Posterior cingulate gyrus (tissue), 11 donors: ENCODE measurements at regions of chr3 and their contacts with region 1.

Region 1: DNA sequence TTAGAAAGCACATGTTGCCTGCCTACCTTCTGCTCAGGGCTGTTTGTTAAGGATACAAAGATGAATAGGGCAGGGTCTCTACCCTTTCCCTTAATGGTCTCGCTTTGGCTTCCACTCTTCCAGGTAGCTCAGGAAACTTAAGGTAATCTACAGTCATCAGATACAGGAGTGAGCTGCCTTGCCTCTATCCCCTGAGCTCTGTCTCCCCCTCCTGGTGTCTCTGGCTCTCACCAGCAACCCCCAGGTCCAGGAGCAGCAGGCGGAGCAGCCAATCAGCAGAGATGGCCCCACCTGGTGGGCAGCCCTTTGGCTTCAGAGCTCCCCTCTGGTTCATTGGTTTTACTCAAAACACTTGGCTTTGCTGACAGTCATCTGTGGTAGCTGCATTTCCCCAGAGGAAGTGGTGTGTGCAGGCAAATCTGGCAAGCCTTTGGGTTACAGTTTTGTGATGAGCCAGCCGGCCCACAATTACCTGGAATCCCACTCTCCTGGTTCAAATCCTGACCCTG is 8.5 kb upstream of the CX3CR1 start:
- DNase-seq: peak; percentile 57 to 96 (median 80)

Region 2: DNA sequence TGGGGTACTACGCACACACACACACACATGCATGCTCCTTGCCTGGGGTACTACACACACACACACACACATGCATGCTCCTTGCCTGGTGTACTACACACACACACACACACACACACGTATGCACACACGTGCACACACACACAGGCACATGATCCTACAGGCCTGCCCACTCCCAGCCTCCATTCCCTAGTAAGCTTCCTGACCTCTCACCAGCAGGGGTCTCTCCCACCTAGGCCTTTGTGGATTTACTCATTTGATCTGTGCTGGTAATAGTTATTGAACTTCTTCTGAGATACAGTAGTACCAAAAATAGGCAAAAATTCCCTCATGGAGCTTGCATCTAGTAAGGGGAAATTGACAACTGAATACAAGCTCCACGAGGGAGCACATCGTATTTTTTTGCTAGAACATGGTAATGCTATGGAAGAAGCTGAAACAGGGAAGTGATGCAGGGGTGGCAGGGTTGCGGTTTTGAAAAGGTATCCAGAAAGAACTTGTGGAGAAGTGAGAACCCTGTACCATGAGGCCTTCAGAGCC is 161.8 kb before region 1 on chr3:
- intact Hi-C with region 1: loop called (anchors 1 kb)
- DNase-seq: peak in 4 of 10 donors; percentile 45 to 56 (median 54)

Region 3: GRCh38 chr3:39189959-39190269 is 98.4 kb before region 1 on chr3:
- intact Hi-C with region 1: loop called (anchors 1 kb)
- DNase-seq: peak in 4 of 10 donors; percentile 56 to 91 (median 60)

Region 4: DNA sequence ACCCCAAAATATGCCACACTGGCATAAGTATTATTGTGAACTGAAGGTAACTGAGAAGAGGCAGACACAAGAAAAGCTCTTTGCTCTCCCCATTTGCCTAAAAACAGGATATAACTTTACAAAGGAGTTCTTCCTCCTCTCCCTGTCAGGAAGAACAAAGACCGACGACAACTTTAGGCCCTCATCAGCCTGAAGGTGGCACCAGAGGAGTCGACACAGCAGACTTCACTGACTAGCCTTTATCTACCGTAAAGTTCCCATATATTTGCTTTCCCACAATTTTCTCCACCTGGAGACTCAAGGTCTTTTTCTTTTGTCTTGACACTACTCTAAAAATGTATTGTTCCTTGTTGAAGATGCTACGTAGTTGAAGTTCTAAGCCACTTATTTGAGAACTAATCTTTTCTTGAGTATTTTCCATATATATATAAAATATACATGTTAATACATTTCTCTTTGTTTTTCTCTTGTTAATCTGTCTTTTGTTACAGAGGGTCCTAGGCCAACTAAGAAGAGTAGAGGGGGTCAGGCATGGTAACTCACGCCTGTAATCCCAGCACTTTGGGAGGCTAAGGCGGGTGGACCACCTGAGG is 79.8 kb before region 1 on chr3:
- intact Hi-C with region 1: loop called (anchors 5 kb)
- DNase-seq: peak in 7 of 10 donors; percentile 47 to 92 (median 56)